ENCODE measurements at regions of chr11 and their contacts with region 1.

Region 1: GRCh38 chr11:96389720-96390487 is at the starts of genes CCDC82 and JRKL:
- DNase-seq: peak; percentile 99
- ATAC-seq: peak; percentile 98
- H3K4me3 Mint-ChIP-seq: peak within 1 kb of the TSS; percentile 94
- H3K27ac Mint-ChIP-seq: peak within 1 kb of the TSS; percentile 90
- H3K4me1 Mint-ChIP-seq: peaks cover 33% of the 10 kb centered on the region
- H3K27me3 Mint-ChIP-seq: no peaks in the 10 kb centered on the region
- CTCF ChIP-seq: no peak
- total RNA-seq, gene CCDC82: 22.6 and 33.8 TPM in 2 replicates
- total RNA-seq, gene JRKL: 9.6 and 9.8 TPM in 2 replicates

Region 2: DNA sequence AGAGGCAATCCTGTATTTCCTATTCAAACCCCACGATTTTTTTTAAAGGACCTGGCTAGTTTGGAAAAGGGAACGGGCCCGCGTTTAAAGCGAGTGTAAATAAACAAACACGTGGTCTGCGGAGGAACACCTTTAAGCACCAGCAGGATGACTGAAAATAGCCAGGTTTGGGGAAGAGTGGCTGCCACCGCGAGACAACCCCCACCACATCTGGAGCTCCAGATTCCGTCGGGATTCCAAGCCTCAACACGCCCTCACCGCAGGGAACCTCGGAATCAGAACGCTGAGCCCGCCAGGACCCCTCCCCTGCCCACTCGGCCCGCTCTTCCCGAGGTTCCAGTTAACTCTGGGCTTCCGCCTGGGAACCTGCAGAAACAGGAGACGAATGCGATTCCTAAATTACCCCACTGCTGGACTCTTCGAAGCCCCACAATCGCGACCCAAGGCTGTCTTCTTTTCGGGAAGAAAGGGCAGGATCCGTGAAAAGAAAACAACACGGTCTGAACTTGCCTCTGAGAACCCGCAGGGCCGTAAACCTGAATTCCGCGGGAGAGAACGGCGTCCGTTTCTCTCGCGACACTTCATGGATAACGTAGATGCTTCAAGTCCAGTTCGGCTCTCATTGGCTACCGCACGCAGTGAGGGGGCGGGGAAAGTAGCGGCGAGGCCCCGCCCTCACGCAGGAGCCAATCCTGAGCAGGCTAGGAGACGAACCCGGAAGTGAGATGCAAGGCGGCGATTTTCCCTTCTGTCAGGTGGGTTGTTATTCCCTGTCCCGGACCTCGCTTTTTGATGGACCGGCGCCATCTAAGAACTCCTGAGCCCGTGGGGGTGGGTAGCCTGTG is 1896.4 kb before region 1 on chr11 and contains the starts of genes ANKRD49 and MRE11:
- CTCF ChIA-PET with region 1: no interaction called
- POLR2A ChIA-PET with region 1: no interaction called
- intact Hi-C with region 1: loop called (anchors 10 kb)
- DNase-seq: peak; percentile 94
- ATAC-seq: peak; percentile 99
- H3K4me3 Mint-ChIP-seq: peak within 1 kb of the TSS; percentile 93
- H3K27ac Mint-ChIP-seq: peak within 1 kb of the TSS; percentile 92
- H3K4me1 Mint-ChIP-seq: peaks cover 39% of the 10 kb centered on the region
- H3K27me3 Mint-ChIP-seq: no peaks in the 10 kb centered on the region
- CTCF ChIP-seq: no peak
- total RNA-seq, gene ANKRD49: 39.5 and 46.5 TPM in 2 replicates
- total RNA-seq, gene MRE11: 39.7 and 40.1 TPM in 2 replicates

Region 3: DNA sequence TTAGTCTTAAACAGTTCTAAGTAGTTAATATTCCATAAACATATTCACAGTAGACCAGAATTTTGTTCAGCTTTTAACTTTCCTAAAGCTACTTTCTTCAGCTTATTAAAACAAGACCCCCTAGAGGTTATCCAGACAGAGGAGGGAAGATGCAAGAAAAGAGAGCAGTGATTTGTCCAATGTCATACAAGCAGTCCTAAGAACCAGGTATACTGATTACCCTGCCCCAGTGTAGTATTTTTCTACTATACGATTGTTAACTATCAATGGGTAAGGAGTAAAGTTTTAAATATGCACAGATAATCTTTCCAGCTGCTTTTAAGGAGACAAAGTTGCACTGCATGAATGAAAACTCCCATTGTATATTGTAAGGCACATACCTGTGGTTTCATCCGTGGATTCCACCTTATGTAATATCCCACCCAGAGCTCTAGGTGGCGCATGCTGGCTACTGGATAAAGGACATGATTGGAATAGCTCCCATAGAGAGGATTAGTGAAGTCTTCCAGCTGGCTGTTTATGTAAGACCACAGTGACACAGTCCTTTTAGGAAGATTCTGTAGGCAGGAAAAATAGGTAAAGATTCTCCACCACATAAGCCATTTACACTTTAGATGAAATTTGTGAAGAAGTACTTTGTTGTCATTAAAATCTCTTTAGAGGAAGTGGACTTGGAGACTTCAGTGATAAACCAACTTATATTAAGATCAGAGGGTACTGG is 554.0 kb before region 1 on chr11:
- CTCF ChIA-PET with region 1: interaction called, 72 read pairs
- POLR2A ChIA-PET with region 1: interaction called, 5 read pairs
- intact Hi-C with region 1: loop called (anchors 1 kb)
- DNase-seq: no peak
- ATAC-seq: peak; percentile 87
- H3K4me3 Mint-ChIP-seq: no peak overlapping the region
- H3K27ac Mint-ChIP-seq: no peak overlapping the region
- H3K4me1 Mint-ChIP-seq: peaks cover 2% of the 10 kb centered on the region
- H3K27me3 Mint-ChIP-seq: no peaks in the 10 kb centered on the region
- CTCF ChIP-seq: no peak

Region 4: DNA sequence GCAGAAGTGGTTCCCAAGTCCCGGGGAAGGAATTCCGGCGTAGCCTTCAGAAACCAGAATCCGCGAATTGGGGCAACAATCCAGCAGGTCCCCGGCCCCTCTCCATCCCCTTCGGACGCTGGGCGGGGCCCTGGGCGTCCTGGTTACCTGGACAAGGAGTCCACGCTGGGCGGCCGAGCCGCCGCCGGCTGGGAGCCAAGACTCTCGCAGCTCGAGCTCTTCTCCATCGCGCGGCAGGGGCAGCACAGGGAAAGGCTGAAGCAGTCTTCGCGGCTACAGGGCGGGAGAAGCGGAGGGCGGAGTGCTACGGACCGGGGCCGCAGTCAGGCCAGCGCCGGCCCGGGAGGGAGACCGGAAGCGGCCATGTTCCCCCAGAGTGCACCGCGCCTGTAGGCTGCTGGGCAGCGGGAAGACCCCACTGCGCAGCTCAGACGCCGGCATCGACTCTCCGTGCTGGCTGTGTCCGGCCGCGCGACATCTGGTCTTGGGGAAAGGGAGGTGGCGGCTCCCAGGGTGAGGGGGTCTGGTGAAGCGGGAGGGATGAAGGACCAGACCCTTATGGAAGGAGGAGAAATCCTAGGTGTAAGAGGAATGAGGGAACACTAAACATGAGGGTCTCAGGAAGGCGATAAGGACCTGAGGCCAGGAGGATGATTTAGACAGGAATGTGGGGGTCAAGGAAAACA is 466.0 kb before region 1 on chr11 and contains the start of gene MTMR2:
- CTCF ChIA-PET with region 1: interaction called, 3 read pairs
- POLR2A ChIA-PET with region 1: interaction called, 4 read pairs
- intact Hi-C with region 1: loop called (anchors 1 kb)
- DNase-seq: peak; percentile 60
- ATAC-seq: peak; percentile 98
- H3K4me3 Mint-ChIP-seq: peak within 1 kb of the TSS; percentile 100
- H3K27ac Mint-ChIP-seq: peak within 1 kb of the TSS; percentile 98
- H3K4me1 Mint-ChIP-seq: peaks cover 29% of the 10 kb centered on the region
- H3K27me3 Mint-ChIP-seq: peaks cover 9% of the 10 kb centered on the region
- CTCF ChIP-seq: no peak
- total RNA-seq, gene MTMR2: 22.6 and 25.1 TPM in 2 replicates

Region 5: DNA sequence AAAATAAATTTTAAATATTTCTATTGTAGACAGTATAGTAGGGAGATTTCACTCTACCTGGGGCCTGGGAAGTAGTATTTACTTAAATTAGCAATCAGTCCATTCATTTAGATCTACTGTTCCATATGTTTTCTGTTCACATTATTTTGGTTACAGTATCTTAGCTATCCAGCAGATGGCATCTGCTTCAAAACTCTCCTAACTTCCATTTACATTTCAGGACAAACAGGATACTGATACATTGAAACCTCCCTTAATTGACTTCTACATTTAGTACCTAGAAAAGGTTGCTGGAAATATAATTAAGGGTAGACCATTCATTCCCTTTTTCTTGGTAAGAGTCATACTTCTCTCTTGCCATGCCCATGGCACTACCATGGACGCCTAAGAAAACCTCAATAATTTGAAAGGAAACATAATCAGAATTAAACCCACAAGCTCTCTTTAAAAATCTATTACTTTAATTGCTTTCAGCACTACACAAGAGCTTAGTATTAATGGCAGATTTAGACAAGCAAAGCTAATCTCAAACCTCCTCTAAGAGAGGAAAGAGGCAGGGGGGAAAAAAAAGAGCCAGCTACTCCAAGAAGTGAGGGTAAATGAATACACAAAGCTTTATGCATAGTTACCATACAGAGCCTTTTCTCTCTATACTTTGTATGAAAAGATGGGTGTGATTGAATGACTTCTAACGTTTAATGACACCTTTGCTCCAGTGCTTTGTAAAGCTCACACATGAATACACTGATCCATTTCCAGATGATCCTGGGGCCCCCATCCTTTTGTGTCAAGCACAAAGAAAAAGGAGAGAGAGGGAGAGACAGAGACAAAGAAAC is 334.8 kb before region 1 on chr11:
- CTCF ChIA-PET with region 1: interaction called, 30 read pairs
- POLR2A ChIA-PET with region 1: no interaction called
- intact Hi-C with region 1: loop called (anchors 1 kb)
- DNase-seq: no peak
- ATAC-seq: no peak
- H3K4me3 Mint-ChIP-seq: no peak overlapping the region
- H3K27ac Mint-ChIP-seq: peak overlapping the region; percentile 15
- H3K4me1 Mint-ChIP-seq: peaks cover 19% of the 10 kb centered on the region
- H3K27me3 Mint-ChIP-seq: no peaks in the 10 kb centered on the region
- CTCF ChIP-seq: peak; percentile 75

Region 6: GRCh38 chr11:96091476-96091875 is 298.4 kb before region 1 on chr11:
- CTCF ChIA-PET with region 1: interaction called, 16 read pairs
- POLR2A ChIA-PET with region 1: no interaction called
- intact Hi-C with region 1: loop called (anchors 1 kb)
- DNase-seq: no peak
- ATAC-seq: peak; percentile 77
- H3K4me3 Mint-ChIP-seq: no peak overlapping the region
- H3K27ac Mint-ChIP-seq: no peak overlapping the region
- H3K4me1 Mint-ChIP-seq: peaks cover 3% of the 10 kb centered on the region
- H3K27me3 Mint-ChIP-seq: no peaks in the 10 kb centered on the region
- CTCF ChIP-seq: no peak

Region 7: DNA sequence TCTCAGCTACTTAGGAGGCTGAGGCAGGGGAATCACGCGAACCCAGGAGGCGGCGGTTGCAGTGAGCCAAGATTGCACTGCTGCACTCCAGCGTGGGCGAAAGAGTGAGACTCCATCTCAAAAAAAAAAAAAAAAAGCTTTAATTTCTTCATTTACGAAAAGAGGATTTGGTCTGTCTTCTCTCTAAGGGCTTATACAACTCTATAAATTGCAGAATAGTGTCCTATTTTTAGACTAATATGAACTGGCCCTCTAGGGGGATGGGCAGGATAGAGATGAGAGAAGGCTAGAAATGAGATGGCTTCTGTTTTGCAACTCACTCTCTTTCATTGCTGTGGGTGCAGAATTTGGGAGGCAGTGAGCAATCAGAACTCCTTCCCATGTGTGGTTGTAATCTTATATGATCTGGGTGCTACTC is 58.2 kb before region 1 on chr11:
- CTCF ChIA-PET with region 1: no interaction called
- POLR2A ChIA-PET with region 1: no interaction called
- intact Hi-C with region 1: no loop called
- DNase-seq: no peak
- ATAC-seq: peak; percentile 40
- H3K4me3 Mint-ChIP-seq: no peak overlapping the region
- H3K27ac Mint-ChIP-seq: no peak overlapping the region
- H3K4me1 Mint-ChIP-seq: peaks cover 47% of the 10 kb centered on the region
- H3K27me3 Mint-ChIP-seq: no peaks in the 10 kb centered on the region
- CTCF ChIP-seq: no peak

Measured in activated B cell treated with CpG ODN at 0.5 μM for 24 hours (primary cell).